CD4-positive, alpha-beta memory T cell (primary cell): ENCODE measurements at regions of chr1 and their contacts with region 1.

Region 1: GRCh38 chr1:108559215-108560186 is at the start of gene EEIG2:
- DNase-seq: peak; percentile 88 to 92 (median 90)
- H3K4me3 ChIP-seq: peak within 1 kb of the TSS; percentile 15 to 59
- H3K4me3 Mint-ChIP-seq: peak within 1 kb of the TSS; percentile 91 to 98 (median 96)
- H3K27ac ChIP-seq: peak within 1 kb of the TSS; percentile 65
- H3K27ac Mint-ChIP-seq: peak within 1 kb of the TSS; percentile 90 to 97 (median 95)
- H3K4me1 ChIP-seq: peaks cover 49% of the 10 kb centered on the region
- H3K4me1 Mint-ChIP-seq: peaks cover 25 to 45% (median 28%) of the 10 kb centered on the region in 4 donors
- H3K27me3 ChIP-seq: no peaks in the 10 kb centered on the region
- H3K27me3 Mint-ChIP-seq: no peaks in the 10 kb centered on the region
- total RNA-seq, gene EEIG2: 9.2 to 10.7 TPM

Region 2: DNA sequence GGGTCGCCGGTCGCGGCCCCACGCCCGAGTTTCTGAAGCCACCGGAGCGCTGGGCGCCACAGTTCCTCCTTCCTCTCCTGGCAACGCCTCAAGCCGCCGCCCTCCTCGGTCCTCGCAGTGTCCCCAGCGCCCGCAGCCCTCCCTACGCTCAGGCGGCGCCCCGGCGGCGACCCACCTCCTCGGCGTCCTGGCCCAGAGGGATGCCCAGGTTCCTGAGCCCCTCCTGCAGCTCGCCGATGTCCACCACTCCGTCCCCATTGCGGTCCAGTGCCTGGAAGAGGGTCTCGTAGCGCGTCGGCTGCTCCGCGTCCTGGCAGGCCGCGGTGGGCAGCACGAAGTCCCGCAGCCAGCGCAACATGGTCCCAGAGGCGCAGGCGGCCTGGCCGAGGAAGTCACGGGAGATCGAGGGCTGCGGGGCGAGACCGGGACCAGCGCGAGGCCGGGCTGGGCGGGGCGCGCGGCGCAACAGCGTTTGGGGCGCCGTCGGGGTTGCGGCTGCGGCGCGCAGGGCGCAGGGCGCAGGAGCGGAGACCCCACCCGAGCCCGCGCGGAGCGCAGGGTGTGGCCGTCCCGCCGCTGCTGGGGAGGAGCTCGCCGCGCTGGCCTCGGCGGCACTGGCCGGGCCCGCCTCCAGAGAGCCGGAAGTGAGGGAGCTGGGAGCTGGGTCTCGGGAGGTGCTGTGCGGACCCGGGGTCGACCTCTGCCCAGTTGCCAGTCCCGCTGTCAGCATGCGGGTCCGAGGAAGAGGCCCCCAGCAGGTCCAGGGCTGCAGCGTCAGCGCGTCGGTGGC is 359.5 kb before region 1 on chr1 and contains the start of gene SLC25A24:
- CTCF ChIA-PET with region 1: no interaction called
- POLR2A ChIA-PET with region 1: interaction called, 17 read pairs
- intact Hi-C with region 1: loop called (anchors 5 kb)
- DNase-seq: peak; percentile 72 to 82 (median 78)
- H3K4me3 ChIP-seq: peak within 1 kb of the TSS; percentile 58 to 80
- H3K4me3 Mint-ChIP-seq: peak within 1 kb of the TSS; percentile 87 to 94 (median 92)
- H3K27ac ChIP-seq: peak within 1 kb of the TSS; percentile 64
- H3K27ac Mint-ChIP-seq: peak within 1 kb of the TSS; percentile 85 to 93 (median 90)
- H3K4me1 ChIP-seq: peaks cover 23% of the 10 kb centered on the region
- H3K4me1 Mint-ChIP-seq: peaks cover 31 to 45% (median 37%) of the 10 kb centered on the region in 4 donors
- H3K27me3 ChIP-seq: no peaks in the 10 kb centered on the region
- H3K27me3 Mint-ChIP-seq: no peaks in the 10 kb centered on the region
- total RNA-seq, gene SLC25A24: 18.6 to 19.1 TPM

Region 3: GRCh38 chr1:108570128-108570527 is 10.6 kb after region 1 on chr1:
- CTCF ChIA-PET with region 1: interaction called, 33 read pairs
- POLR2A ChIA-PET with region 1: interaction called, 7 read pairs
- intact Hi-C with region 1: no loop called
- DNase-seq: peak in 4 of 5 donors; percentile 19 to 39 (median 32)
- H3K4me3 ChIP-seq: no peak overlapping the region
- H3K4me3 Mint-ChIP-seq: no peak overlapping the region
- H3K27ac ChIP-seq: no peak overlapping the region
- H3K27ac Mint-ChIP-seq: no peak overlapping the region
- H3K4me1 ChIP-seq: peaks cover 13% of the 10 kb centered on the region
- H3K4me1 Mint-ChIP-seq: peaks cover 0 to 7% (median 4%) of the 10 kb centered on the region in 4 donors
- H3K27me3 ChIP-seq: no peaks in the 10 kb centered on the region
- H3K27me3 Mint-ChIP-seq: no peaks in the 10 kb centered on the region

Region 4: GRCh38 chr1:108643492-108644335 is 84.2 kb after region 1 on chr1:
- CTCF ChIA-PET with region 1: interaction called, 153 read pairs
- POLR2A ChIA-PET with region 1: interaction called, 162 read pairs
- intact Hi-C with region 1: loop called (anchors 1 kb)
- DNase-seq: peak; percentile 57 to 73 (median 69)
- H3K4me3 ChIP-seq: no peak overlapping the region
- H3K4me3 Mint-ChIP-seq: peak overlapping the region in 7 of 8 donors; percentile 4 to 52 (median 17)
- H3K27ac ChIP-seq: peak overlapping the region; percentile 57
- H3K27ac Mint-ChIP-seq: peak overlapping the region; percentile 91 to 99 (median 98)
- H3K4me1 ChIP-seq: peaks cover 64% of the 10 kb centered on the region
- H3K4me1 Mint-ChIP-seq: peaks cover 59 to 76% (median 68%) of the 10 kb centered on the region in 4 donors
- H3K27me3 ChIP-seq: no peaks in the 10 kb centered on the region
- H3K27me3 Mint-ChIP-seq: no peaks in the 10 kb centered on the region

Region 5: GRCh38 chr1:108746372-108747205 is 187.1 kb after region 1 on chr1 and contains the start of gene STXBP3:
- CTCF ChIA-PET with region 1: interaction called, 4 read pairs
- POLR2A ChIA-PET with region 1: interaction called, 5 read pairs
- intact Hi-C with region 1: loop called (anchors 1 kb)
- DNase-seq: peak; percentile 98 to 99 (median 99)
- H3K4me3 ChIP-seq: peak within 1 kb of the TSS; percentile 57 to 85
- H3K4me3 Mint-ChIP-seq: peak within 1 kb of the TSS; percentile 94 to 100 (median 99)
- H3K27ac ChIP-seq: peak within 1 kb of the TSS; percentile 95
- H3K27ac Mint-ChIP-seq: peak within 1 kb of the TSS; percentile 94 to 100 (median 99)
- H3K4me1 ChIP-seq: peaks cover 41% of the 10 kb centered on the region
- H3K4me1 Mint-ChIP-seq: peaks cover 25 to 47% (median 34%) of the 10 kb centered on the region in 4 donors
- H3K27me3 ChIP-seq: no peaks in the 10 kb centered on the region
- H3K27me3 Mint-ChIP-seq: no peaks in the 10 kb centered on the region
- total RNA-seq, gene STXBP3: 90.9 to 92.5 TPM

Region 6: GRCh38 chr1:109570417-109570827 is 1010.9 kb after region 1 on chr1:
- CTCF ChIA-PET with region 1: no interaction called
- POLR2A ChIA-PET with region 1: no interaction called
- intact Hi-C with region 1: no loop called
- DNase-seq: no peak
- H3K4me3 ChIP-seq: no peak overlapping the region
- H3K4me3 Mint-ChIP-seq: no peak overlapping the region
- H3K27ac ChIP-seq: no peak overlapping the region
- H3K27ac Mint-ChIP-seq: no peak overlapping the region
- H3K4me1 ChIP-seq: peaks cover 35% of the 10 kb centered on the region
- H3K4me1 Mint-ChIP-seq: peaks cover 18 to 40% (median 32%) of the 10 kb centered on the region in 4 donors
- H3K27me3 ChIP-seq: no peaks in the 10 kb centered on the region
- H3K27me3 Mint-ChIP-seq: no peaks in the 10 kb centered on the region